ENCODE measurements at regions of chr3 and their contacts with region 1.

Region 1: GRCh38 chr3:19364148-19364547 is 215.8 kb downstream of the KCNH8 start:
- DNase-seq: no peak
- H3K4me3 ChIP-seq: no peak overlapping the region
- H3K27ac ChIP-seq: no peak overlapping the region
- H3K4me1 ChIP-seq: peaks cover 0 to 36% (median 3%) of the 10 kb centered on the region in 4 donors
- H3K27me3 ChIP-seq: no peaks in the 10 kb centered on the region
- CTCF ChIP-seq: no peak

Region 2: DNA sequence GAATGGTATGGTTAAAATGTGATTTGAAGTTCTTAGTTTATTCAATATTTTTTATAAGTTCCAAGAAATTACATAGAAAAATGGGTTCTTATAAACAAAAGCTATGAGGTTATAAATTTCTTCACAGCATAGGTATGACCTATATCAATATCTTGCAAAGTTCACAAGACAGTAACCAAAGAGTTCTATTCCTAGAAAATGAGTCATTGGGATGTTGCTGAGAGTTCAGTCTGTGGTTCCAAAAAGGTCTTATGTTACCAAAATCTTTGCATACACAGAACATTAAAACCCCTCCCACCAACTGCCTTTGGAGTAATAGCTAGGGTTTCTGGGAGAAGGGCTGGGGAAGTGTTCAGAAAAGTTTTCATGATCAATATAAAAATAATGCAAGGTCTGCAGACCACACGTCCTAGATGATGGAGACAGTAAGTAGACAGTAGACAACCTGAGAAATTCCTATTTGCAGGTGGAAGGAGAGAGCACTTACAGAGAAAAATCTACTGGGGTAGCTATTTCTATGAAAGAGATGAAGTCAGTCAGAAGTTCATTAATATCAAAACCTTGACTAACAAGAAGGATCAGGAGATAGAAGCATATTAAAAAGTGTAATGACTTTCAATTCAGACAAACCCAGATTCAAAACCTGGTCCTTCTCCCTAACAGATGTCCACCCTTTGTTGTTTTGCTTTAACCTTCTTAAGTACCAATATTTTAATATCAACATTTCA is 63.4 kb after region 1 on chr3:
- intact Hi-C with region 1: loop called (anchors 10 kb)
- DNase-seq: no peak
- H3K4me3 ChIP-seq: no peak overlapping the region
- H3K27ac ChIP-seq: no peak overlapping the region
- H3K4me1 ChIP-seq: peaks cover 0 to 16% (median 6%) of the 10 kb centered on the region in 4 donors
- H3K27me3 ChIP-seq: no peaks in the 10 kb centered on the region
- CTCF ChIP-seq: no peak

Measured in tibial artery (tissue), 4 donors.